ENCODE measurements at regions of chrX and their contacts with region 1.

Region 1: DNA sequence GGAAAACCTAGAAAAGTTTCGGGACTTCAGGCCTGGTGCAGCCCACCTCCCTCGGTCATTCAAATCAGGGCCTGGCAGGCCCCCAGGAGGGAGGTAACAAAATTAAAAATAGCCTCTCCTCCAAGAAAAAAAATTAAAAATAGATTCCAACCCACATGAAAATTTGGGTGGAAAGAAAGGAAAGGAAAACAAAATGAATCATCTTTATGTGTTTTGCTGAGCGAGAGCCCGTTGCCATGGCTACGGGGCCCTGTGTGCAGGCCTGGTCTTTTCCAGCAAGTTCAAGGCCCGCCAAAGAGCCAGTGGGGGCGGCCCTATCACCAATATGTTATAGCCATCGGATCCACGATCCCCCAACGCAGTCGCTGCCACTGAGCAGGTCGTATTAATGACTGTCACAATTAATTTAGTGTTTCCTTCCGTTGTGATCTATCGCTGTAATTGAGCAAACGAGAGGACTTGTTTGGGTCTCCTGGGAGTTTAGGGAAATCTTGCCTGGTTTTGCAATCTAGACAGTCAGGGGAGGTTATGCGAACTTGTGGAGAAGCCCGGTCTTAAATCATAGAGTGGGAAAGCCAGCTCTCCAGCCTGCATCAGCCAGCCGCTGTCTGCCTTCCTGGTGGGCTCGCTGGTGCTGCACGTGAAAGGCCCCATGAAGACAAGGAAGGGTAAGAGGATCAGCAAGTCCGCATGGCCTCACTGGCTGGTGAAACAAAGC is 452.4 kb downstream of the BCOR start:
- DNase-seq: peak; percentile 47 to 89
- H3K4me3 ChIP-seq: no peak overlapping the region
- H3K27ac ChIP-seq: peak overlapping the region; percentile 32 to 62
- H3K4me1 ChIP-seq: peaks cover 0 to 8% of the 10 kb centered on the region in 2 donors
- H3K27me3 ChIP-seq: no peaks in the 10 kb centered on the region
- CTCF ChIP-seq: no peak

Region 2: GRCh38 chrX:39381422-39381821 is 263.9 kb before region 1 on chrX:
- intact Hi-C with region 1: no loop called
- DNase-seq: no peak
- H3K4me3 ChIP-seq: no peak overlapping the region
- H3K27ac ChIP-seq: no peak overlapping the region
- H3K4me1 ChIP-seq: no peaks in the 10 kb centered on the region
- H3K27me3 ChIP-seq: no peaks in the 10 kb centered on the region
- CTCF ChIP-seq: no peak

Region 3: GRCh38 chrX:39688576-39689375 is 43.4 kb after region 1 on chrX:
- intact Hi-C with region 1: loop called (anchors 5 kb)
- DNase-seq: peak in 1 of 2 donors; percentile 71
- H3K4me3 ChIP-seq: peak overlapping the region; percentile 37 to 61
- H3K27ac ChIP-seq: peak overlapping the region; percentile 51 to 52
- H3K4me1 ChIP-seq: peaks cover 0 to 4% of the 10 kb centered on the region in 2 donors
- H3K27me3 ChIP-seq: no peaks in the 10 kb centered on the region
- CTCF ChIP-seq: no peak

Region 4: DNA sequence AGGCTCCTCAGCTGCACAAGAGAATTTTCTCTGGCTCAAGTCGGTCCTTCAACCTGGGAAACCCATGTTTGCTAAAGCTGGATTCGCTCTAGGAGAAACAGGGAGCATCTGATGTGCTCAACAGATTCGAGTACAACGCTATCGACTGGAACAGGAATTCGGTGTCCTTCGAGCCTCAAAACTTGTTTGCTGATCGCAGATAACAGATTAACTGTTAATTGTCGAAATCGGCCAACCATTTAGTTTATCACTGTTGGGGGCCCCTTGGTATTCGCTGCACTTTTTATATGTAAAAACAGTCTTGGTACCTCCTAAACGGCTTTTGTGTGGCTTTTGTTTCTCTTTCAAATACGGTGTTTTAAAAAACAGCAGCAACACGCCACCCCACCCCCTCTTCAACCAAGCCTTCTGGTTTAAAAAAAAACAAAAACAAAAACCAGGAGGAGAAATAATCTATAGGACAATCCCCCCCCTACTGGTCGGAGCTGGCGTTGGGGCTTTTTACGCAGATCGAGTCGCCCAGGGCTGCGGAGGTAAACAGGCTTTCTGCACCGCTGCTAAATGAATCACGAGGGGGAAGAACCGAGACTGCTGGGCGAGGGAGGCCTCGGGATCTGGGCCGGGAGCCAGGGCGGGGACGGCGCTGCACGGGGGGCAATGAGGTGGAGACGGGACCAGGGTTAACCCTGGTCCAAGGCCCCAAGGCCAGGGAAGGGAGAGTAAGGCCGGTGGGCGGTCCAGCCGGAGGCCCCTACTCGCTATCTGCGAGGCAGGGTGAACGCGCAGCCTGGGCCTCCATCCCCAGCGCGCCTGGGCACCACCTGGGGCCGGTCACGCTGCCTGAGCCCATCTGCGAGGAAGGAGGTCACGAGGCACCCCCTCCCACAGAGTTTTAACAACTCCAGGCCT is 524.1 kb after region 1 on chrX:
- intact Hi-C with region 1: loop called (anchors 5 kb)
- DNase-seq: peak in 1 of 2 donors; percentile 66
- H3K4me3 ChIP-seq: no peak overlapping the region
- H3K27ac ChIP-seq: no peak overlapping the region
- H3K4me1 ChIP-seq: peaks cover 3 to 11% of the 10 kb centered on the region in 2 donors
- H3K27me3 ChIP-seq: no peaks in the 10 kb centered on the region
- CTCF ChIP-seq: peak in 1 of 3 experiments; percentile 20